Colonic mucosa (tissue), 4 donors: ENCODE measurements at regions of chr5 and their contacts with region 1.

Region 1: DNA sequence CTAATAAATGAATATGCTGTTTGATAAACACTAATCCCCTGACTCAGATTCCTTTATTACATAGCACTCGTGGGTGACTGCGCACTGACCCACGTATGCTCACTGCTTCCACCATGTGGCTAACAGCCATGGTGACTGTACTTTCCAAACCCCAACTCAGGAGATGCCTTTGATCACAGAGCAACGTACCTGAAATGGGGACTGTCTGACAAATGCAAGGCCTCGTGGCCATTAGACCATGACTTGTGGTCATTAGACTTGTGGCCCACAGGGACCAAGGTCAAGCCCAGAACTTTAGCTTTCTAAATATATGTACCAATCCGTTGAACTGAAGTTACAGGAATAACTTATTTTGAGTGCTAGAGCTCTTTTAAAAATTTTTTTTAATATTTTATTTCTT is 46.6 kb downstream of the CYFIP2 start:
- DNase-seq: peak; percentile 26
- H3K4me3 ChIP-seq: no peak overlapping the region
- H3K27ac ChIP-seq: no peak overlapping the region
- H3K4me1 ChIP-seq: no peaks in the 10 kb centered on the region
- H3K27me3 ChIP-seq: no peaks in the 10 kb centered on the region
- CTCF ChIP-seq: peak; percentile 54

Region 2: GRCh38 chr5:157148734-157149615 is 163.5 kb before region 1 on chr5:
- intact Hi-C with region 1: loop called (anchors 5 kb)
- DNase-seq: peak; percentile 84
- H3K4me3 ChIP-seq: no peak overlapping the region
- H3K27ac ChIP-seq: no peak overlapping the region
- H3K4me1 ChIP-seq: no peaks in the 10 kb centered on the region
- H3K27me3 ChIP-seq: no peaks in the 10 kb centered on the region
- CTCF ChIP-seq: peak; percentile 81

Region 3: DNA sequence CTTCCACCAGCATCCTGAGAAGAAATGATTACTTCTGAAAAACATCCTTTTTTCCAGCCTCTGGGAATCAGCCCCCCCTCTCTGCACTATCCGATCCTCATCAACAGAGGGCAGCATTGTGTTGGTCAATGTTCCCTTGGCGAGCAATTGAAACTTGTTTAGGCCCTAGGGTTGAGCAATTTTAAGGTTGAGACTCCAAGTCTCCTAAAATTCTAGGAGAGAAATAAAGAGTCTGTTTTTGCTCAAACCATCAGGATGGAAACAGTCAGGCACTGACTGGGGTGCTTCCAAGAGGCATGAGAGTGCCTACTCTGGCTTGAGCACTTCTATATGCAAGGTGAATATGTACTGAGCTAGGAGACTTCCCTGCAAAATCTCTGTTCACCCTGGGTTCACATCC is 58.9 kb before region 1 on chr5:
- intact Hi-C with region 1: loop called (anchors 2 kb)
- DNase-seq: peak; percentile 59
- H3K4me3 ChIP-seq: no peak overlapping the region
- H3K27ac ChIP-seq: no peak overlapping the region
- H3K4me1 ChIP-seq: no peaks in the 10 kb centered on the region
- H3K27me3 ChIP-seq: no peaks in the 10 kb centered on the region
- CTCF ChIP-seq: peak; percentile 88